ENCODE measurements at regions of chr11 and their contacts with region 1.

Region 1: GRCh38 chr11:10653926-10654810 is 39.4 kb downstream of the IRAG1 start:
- DNase-seq: no peak
- ATAC-seq: peak; percentile 59

Region 2: GRCh38 chr11:10405855-10406592 is 248.1 kb before region 1 on chr11:
- intact Hi-C with region 1: loop called (anchors 1 kb)
- DNase-seq: no peak
- ATAC-seq: peak; percentile 88

Region 3: DNA sequence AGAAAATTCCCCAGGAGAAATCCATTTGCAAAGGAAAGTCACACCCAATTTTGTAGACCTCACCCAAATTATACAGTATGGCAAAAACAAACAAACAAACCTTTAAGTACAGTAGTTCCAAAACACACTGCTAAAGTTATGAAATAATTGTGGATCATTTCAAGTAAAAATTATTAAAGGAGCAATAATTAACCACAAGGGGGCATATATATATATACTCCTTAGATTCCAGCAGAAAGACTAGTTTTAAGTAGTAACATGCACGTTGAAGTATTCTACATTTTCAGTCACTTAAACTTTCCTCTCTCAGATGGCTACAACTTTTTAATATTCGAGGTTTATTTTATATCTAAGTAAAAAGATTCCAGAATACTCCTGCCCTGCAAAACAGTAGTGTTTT is 140.0 kb before region 1 on chr11:
- intact Hi-C with region 1: loop called (anchors 10 kb)
- DNase-seq: no peak
- ATAC-seq: no peak

Region 4: DNA sequence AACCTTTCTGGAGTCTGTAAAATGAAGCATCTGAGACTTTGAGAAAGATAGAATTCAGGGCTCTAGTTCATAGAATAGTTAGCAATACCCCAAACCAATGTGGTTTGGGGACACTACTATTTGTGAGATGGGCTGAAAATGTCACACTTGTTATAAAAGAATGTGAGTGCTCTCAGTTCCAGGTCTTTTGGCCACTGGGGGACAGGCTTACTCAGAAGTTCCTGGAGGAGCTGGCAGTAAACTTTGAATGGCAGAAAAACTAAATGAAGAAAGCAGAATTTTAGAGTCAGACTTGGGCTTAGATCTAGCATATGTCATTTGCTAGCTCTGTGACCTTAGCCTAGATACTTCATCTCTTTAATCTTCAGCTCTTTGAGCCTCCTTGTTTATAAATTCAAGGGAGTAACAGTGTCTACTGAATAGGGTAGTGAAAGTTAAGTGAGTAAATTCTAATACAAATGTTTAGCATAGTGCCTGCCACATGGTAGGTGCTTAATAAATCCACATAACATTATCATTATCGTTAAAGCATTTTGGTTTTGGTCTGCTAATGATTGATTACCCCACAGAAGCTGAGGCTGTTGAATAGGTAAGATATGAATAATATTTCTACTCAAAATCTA is 89.4 kb before region 1 on chr11:
- intact Hi-C with region 1: loop called (anchors 10 kb)
- DNase-seq: no peak
- ATAC-seq: no peak

Region 5: DNA sequence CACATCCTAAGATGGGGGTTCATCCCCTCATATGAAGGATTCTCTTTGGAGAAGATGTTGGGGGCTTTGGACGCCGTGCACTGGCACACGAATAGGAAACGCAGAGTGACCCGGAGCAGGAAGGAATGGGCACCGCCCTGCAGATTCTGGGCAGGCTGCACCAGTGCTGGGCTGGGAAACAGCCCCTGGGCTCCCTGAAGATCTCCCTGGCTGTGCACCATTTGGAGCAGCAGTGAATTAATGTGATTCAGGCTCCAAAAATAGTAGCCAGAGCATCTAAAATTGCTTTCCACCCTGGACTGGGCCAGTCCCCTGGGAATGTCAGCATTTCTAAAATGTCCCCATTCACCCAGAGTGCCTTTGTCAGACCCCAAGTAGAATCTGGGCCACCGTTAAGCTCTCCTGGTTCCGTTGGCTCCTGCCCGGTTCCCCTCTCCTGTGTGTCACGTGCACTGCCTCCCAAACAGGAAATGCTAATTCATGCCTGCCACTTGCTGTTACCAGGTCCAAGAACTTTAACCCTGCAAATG is 20.8 kb after region 1 on chr11:
- intact Hi-C with region 1: loop called (anchors 2 kb)
- DNase-seq: peak; percentile 71
- ATAC-seq: peak; percentile 91

Region 6: DNA sequence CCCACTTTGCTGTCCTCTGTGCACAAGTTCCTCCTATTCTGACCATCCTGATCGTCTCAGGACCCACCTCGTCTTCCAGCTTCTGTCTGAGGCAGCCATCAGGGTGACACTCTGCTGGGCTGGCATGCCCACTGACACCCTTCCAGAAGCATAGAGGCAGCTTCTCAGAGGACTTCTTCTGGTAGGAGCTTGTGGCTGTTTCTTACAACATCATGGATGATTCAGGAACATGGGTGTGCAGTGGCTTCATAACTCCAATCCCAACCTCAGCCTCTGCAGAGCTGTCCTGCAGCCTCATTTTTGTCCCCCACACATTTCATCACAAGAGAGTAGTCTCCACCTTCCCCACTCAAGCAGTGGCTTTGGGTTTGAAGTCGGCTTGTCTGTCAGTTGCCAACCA is 76.0 kb after region 1 on chr11:
- intact Hi-C with region 1: loop called (anchors 5 kb)
- DNase-seq: no peak
- ATAC-seq: no peak

Region 7: DNA sequence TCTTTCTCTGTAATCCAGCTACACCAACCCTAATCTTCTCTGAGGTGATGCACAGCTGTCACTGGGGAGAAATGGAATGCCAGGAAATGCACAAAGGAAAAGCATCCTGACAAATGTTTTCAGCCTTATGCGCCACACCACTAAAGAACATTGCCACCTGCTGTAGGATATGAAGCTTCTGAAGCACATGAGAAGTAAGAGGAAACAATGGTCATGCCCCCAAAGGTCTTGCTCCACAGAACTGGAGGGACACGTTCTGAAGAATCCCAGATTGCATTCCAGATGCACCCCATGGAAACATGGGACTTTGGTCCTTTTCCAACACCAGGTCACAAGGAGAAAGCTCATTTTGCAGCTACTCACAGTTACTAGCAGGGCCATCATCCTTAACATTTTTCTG is 252.3 kb after region 1 on chr11:
- intact Hi-C with region 1: no loop called
- DNase-seq: no peak
- ATAC-seq: peak; percentile 51

Measured in Right ventricle myocardium inferior (tissue), 1 donor.